ENCODE measurements at regions of chr1 and their contacts with region 1.

Region 1: GRCh38 chr1:206583707-206584648 is 28.3 kb downstream of the EIF2D start:
- DNase-seq: peak; percentile 91
- H3K4me3 Mint-ChIP-seq: peak overlapping the region; percentile 56
- H3K27ac Mint-ChIP-seq: peak overlapping the region; percentile 95
- H3K4me1 Mint-ChIP-seq: peaks cover 89% of the 10 kb centered on the region
- H3K27me3 Mint-ChIP-seq: no peaks in the 10 kb centered on the region

Region 2: DNA sequence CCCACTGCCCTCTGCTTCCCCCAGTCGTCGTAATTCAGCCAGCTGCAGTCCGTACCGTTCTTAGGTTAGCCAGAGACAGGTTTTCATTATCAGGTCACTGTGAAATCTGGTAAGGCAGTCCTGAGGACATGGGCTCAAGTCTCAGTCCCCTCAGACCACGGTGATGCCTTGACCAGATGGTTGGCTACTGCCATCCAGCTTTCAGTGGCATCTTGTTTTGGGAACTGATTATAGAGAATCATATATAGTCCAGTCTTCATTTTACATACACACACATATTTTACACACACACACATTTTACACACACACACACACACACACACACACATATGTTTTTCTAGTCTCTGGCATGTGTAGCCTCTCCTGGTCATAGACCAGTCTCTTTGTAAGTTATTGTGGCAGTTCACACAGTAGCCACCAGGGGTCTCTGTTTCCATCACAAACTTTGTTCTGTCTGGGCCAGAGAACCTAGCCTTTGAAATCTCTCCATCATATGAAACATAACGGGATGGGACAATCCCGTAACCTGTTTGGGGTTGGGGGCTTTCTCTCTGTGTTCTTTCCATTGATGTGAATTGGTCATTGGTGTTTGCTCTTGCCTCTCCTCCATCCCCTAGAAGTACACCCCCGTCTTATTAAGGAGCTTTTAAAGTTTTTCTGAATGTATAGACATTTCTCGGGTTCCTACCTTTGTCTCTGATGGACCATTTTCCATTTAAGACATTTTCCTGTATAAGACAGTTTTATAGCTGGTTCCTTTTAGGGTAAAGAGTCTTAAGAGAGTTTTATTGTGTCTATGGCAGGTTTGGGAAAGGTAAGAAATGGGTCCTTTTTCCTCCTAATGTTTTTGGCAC is 122.1 kb before region 1 on chr1:
- CTCF ChIA-PET with region 1: interaction called, 14 read pairs
- DNase-seq: peak; percentile 87
- H3K4me3 Mint-ChIP-seq: no peak overlapping the region
- H3K27ac Mint-ChIP-seq: no peak overlapping the region
- H3K4me1 Mint-ChIP-seq: peaks cover 41% of the 10 kb centered on the region
- H3K27me3 Mint-ChIP-seq: no peaks in the 10 kb centered on the region

Region 3: GRCh38 chr1:206479183-206480125 is 104.5 kb before region 1 on chr1:
- CTCF ChIA-PET with region 1: interaction called, 31 read pairs
- DNase-seq: peak; percentile 79
- H3K4me3 Mint-ChIP-seq: no peak overlapping the region
- H3K27ac Mint-ChIP-seq: peak overlapping the region; percentile 58
- H3K4me1 Mint-ChIP-seq: peaks cover 16% of the 10 kb centered on the region
- H3K27me3 Mint-ChIP-seq: no peaks in the 10 kb centered on the region

Region 4: DNA sequence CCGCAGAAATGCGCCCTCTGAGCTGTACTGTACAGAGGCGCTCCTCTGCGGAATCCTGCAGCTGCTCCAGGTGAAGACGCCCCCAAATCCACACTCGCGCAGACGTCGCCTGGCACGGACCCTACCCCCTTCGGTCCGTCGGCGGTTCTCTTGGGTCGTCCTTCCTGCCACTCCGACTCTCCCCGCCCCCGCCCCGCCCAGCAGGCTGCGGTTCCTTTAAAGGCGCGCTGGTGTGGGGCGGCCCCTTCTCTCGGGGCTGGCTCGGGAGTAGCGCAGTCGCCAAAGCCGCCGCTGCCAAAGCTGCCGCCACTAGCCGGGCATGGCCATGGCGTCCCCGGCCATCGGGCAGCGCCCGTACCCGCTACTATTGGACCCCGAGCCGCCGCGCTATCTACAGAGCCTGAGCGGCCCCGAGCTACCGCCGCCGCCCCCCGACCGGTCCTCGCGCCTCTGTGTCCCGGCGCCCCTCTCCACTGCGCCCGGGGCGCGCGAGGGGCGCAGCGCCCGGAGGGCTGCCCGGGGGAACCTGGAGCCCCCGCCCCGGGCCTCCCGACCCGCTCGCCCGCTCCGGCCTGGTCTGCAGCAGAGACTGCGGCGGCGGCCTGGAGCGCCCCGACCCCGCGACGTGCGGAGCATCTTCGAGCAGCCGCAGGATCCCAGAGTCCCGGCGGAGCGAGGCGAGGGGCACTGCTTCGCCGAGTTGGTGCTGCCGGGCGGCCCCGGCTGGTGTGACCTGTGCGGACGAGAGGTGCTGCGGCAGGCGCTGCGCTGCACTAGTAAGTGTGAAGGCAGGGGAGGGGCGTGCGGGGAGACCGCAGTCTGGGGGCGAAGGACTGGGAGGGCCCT is 76.5 kb before region 1 on chr1 and contains the start of gene RASSF5:
- CTCF ChIA-PET with region 1: interaction called, 21 read pairs
- DNase-seq: peak; percentile 90
- H3K4me3 Mint-ChIP-seq: peak within 1 kb of the TSS; percentile 72
- H3K27ac Mint-ChIP-seq: no peak within 1 kb of the TSS
- H3K4me1 Mint-ChIP-seq: peaks cover 32% of the 10 kb centered on the region
- H3K27me3 Mint-ChIP-seq: peaks cover 76% of the 10 kb centered on the region

Region 5: GRCh38 chr1:206556750-206557635 is 27.0 kb before region 1 on chr1:
- CTCF ChIA-PET with region 1: interaction called, 414 read pairs
- DNase-seq: peak; percentile 95
- H3K4me3 Mint-ChIP-seq: peak overlapping the region; percentile 86
- H3K27ac Mint-ChIP-seq: peak overlapping the region; percentile 93
- H3K4me1 Mint-ChIP-seq: peaks cover 72% of the 10 kb centered on the region
- H3K27me3 Mint-ChIP-seq: no peaks in the 10 kb centered on the region